Endothelial cell of umbilical vein (primary cell): ENCODE measurements at regions of chr11 and their contacts with region 1.

Region 1: DNA sequence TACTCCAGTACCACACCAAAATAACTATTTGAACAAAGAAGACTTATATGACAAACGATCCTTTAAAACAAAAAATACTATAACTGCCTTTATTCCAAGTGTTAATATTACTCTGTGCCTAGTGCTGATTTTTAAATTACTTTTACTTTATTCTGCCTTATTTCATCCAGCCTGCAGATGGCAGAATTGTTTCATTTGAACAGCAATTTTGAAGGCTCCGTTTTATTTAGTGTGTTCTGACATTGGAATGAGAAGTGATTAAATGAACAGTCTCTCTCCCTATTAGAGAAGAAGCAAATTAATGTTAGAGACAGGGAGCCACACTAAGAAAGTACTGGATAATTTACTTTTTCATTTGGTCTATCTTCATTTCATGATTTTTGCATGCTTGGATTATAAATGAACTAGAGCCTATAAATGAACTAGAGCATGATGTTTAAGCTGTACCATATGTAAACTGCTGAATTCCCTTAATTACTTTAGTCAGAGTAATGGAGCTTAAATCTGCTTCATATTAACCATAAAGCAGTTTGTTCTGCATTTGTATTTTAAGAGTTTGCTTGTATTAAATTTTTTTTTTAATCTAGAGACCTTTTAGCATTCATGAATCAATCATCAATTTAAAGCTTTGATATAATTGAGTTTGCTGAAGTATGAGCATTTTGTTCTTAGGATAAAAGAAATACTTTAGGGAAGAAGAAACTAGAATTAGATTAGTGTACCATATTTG is 9.8 kb downstream of the PDHX start:
- DNase-seq: peak; percentile 67
- H3K4me3 ChIP-seq: no peak overlapping the region
- H3K27ac ChIP-seq: no peak overlapping the region
- H3K4me1 ChIP-seq: peaks cover 5% of the 10 kb centered on the region
- H3K27me3 ChIP-seq: no peaks in the 10 kb centered on the region
- CTCF ChIP-seq: peak; percentile 34 to 46
- POLR2A ChIP-seq: no peak

Region 2: GRCh38 chr11:34997952-34998528 is 71.8 kb after region 1 on chr11:
- CTCF ChIA-PET with region 1: interaction called, 10 read pairs
- POLR2A ChIA-PET with region 1: no interaction called
- dilution Hi-C with region 1: no loop called
- intact Hi-C with region 1: loop called (anchors 5 kb)
- DNase-seq: peak; percentile 26
- H3K4me3 ChIP-seq: no peak overlapping the region
- H3K27ac ChIP-seq: no peak overlapping the region
- H3K4me1 ChIP-seq: peaks cover 4% of the 10 kb centered on the region
- H3K27me3 ChIP-seq: no peaks in the 10 kb centered on the region
- CTCF ChIP-seq: no peak
- POLR2A ChIP-seq: no peak

Region 3: DNA sequence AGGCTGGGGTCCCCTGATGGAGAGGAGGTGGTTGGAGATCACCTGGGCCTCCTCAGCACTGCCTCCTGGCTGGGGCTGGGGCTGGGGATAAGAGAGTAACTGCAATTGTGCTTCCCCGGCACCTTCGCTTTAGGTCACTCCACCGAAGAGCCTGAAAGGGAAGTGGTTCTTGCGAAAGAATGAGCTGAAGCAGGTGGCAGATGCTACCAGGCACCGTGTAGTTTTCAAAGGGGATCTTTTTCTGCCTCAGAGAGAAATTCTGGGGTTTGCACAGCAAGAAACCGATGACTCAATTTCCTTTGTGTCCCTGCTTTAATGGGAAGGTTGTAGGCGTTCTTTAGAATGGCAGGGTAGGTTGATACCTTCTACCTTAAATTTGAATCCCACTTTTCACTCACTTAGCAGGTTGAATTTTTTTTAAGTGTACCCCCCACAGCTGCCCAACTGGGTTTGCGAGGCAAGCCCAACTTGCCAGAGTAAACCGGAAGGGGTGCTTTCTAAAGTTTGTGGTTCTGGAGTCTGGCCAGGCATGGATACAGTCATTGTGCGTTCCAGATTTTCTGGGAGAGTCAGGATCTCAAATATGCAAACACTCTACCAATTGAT is 218.0 kb after region 1 on chr11:
- CTCF ChIA-PET with region 1: interaction called, 10 read pairs
- POLR2A ChIA-PET with region 1: no interaction called
- dilution Hi-C with region 1: no loop called
- intact Hi-C with region 1: loop called (anchors 5 kb)
- DNase-seq: no peak
- H3K4me3 ChIP-seq: no peak overlapping the region
- H3K27ac ChIP-seq: no peak overlapping the region
- H3K4me1 ChIP-seq: peaks cover 25% of the 10 kb centered on the region
- H3K27me3 ChIP-seq: peaks cover 0 to 5% of the 10 kb centered on the region in 2 experiments
- CTCF ChIP-seq: no peak
- POLR2A ChIP-seq: no peak

Region 4: GRCh38 chr11:35391922-35392813 is 465.9 kb after region 1 on chr11:
- CTCF ChIA-PET with region 1: interaction called, 124 read pairs
- POLR2A ChIA-PET with region 1: no interaction called
- dilution Hi-C with region 1: no loop called
- intact Hi-C with region 1: loop called (anchors 1 kb)
- DNase-seq: peak; percentile 62
- H3K4me3 ChIP-seq: no peak overlapping the region
- H3K27ac ChIP-seq: no peak overlapping the region
- H3K4me1 ChIP-seq: no peaks in the 10 kb centered on the region
- H3K27me3 ChIP-seq: peaks cover 10 to 14% of the 10 kb centered on the region in 2 experiments
- CTCF ChIP-seq: peak; percentile 80 to 81
- POLR2A ChIP-seq: no peak

Region 5: DNA sequence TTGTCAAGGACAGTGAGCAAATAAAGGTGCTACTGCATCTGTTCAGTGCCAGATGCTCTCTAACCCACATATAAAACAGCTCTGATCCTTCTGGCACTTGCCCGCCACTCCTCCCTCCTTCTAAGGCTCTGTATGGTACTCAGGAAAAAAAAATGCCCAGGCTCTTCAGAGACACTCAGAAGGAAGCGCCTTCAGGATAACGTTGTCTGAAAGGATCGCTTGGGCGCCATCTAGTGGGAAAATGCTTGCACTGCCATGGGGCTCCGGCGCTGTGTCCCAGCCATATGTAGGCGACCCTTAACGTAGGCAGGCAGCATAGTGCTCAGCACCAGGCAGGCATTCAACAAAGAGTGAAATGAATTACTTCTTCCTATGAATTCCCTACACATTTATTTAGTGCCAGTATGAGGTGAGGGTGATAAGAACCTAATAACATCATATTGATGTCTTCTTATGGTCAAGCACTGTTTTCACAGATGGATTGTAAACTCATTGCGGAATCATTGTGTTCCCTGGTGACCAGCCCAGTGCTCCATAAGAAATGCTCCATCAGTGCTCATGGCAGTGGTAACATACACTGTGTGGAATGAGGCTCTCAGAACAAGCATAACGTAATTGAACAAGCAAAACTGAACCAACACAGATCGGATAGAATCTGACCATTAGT is 559.5 kb after region 1 on chr11:
- CTCF ChIA-PET with region 1: interaction called, 13 read pairs
- POLR2A ChIA-PET with region 1: no interaction called
- dilution Hi-C with region 1: no loop called
- intact Hi-C with region 1: loop called (anchors 1 kb)
- DNase-seq: peak; percentile 79
- H3K4me3 ChIP-seq: no peak overlapping the region
- H3K27ac ChIP-seq: no peak overlapping the region
- H3K4me1 ChIP-seq: no peaks in the 10 kb centered on the region
- H3K27me3 ChIP-seq: peaks cover 8 to 10% of the 10 kb centered on the region in 2 experiments
- CTCF ChIP-seq: peak; percentile 85 to 92
- POLR2A ChIP-seq: no peak